Mammary epithelial cell (primary cell): ENCODE measurements at regions of chr10 and their contacts with region 1.

Region 1: GRCh38 chr10:99612167-99612831 is 7.9 kb downstream of the SLC25A28 start:
- DNase-seq: peak; percentile 62
- H3K4me3 ChIP-seq: no peak overlapping the region
- H3K27ac ChIP-seq: no peak overlapping the region
- H3K4me1 ChIP-seq: peaks cover 1% of the 10 kb centered on the region
- H3K27me3 ChIP-seq: no peaks in the 10 kb centered on the region
- CTCF ChIP-seq: peak; percentile 80 to 82

Region 2: DNA sequence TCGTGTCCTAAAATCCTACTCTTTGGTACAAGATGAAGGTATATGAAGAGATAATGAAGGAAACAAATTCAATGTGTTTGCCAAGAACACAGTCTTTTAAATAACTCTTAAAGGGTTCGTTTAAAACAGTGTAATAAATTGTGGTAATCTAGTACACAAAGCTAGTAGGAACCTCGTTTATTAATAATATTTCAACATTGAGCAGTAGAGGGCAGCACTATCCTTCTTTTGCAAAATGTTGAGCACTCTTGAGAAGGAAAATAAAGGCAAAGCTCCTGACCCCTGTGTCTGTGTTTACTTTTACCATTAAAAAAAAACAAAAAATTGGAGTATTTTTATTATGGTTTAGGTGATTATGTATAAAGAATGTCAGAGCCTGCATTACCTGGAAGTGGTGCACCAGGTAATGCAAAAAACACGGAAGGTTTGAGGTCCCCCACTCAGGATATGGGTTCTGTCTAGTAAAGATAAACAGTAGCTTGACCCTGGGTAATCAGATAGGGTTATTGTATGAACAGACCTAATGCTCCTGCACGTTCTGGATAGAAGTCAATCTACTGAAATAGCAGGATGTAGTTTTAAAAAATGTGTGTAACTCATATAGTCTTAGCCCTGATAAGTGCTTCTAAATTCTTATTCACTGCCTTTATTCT is 176.2 kb before region 1 on chr10:
- CTCF ChIA-PET with region 1: no interaction called
- dilution Hi-C with region 1: loop called (anchors 10 kb)
- in situ Hi-C with region 1: loop called (anchors 10 kb)
- intact Hi-C with region 1: loop called (anchors 1 kb)
- DNase-seq: peak; percentile 37
- H3K4me3 ChIP-seq: no peak overlapping the region
- H3K27ac ChIP-seq: no peak overlapping the region
- H3K4me1 ChIP-seq: peaks cover 3% of the 10 kb centered on the region
- H3K27me3 ChIP-seq: no peaks in the 10 kb centered on the region
- CTCF ChIP-seq: peak; percentile 42 to 52

Region 3: GRCh38 chr10:99484603-99485581 is 127.4 kb before region 1 on chr10:
- CTCF ChIA-PET with region 1: no interaction called
- dilution Hi-C with region 1: no loop called
- in situ Hi-C with region 1: no loop called
- intact Hi-C with region 1: loop called (anchors 1 kb)
- DNase-seq: peak; percentile 2
- H3K4me3 ChIP-seq: no peak overlapping the region
- H3K27ac ChIP-seq: no peak overlapping the region
- H3K4me1 ChIP-seq: no peaks in the 10 kb centered on the region
- H3K27me3 ChIP-seq: peaks cover 7% of the 10 kb centered on the region
- CTCF ChIP-seq: peak; percentile 30 to 45

Region 4: GRCh38 chr10:99560277-99561126 is 51.8 kb before region 1 on chr10:
- CTCF ChIA-PET with region 1: no interaction called
- dilution Hi-C with region 1: no loop called
- in situ Hi-C with region 1: no loop called
- intact Hi-C with region 1: loop called (anchors 1 kb)
- DNase-seq: peak; percentile 32
- H3K4me3 ChIP-seq: no peak overlapping the region
- H3K27ac ChIP-seq: no peak overlapping the region
- H3K4me1 ChIP-seq: peaks cover 4% of the 10 kb centered on the region
- H3K27me3 ChIP-seq: no peaks in the 10 kb centered on the region
- CTCF ChIP-seq: peak; percentile 78 to 80